Mammary epithelial cell (primary cell): ENCODE measurements at regions of chrX and their contacts with region 1.

Region 1: DNA sequence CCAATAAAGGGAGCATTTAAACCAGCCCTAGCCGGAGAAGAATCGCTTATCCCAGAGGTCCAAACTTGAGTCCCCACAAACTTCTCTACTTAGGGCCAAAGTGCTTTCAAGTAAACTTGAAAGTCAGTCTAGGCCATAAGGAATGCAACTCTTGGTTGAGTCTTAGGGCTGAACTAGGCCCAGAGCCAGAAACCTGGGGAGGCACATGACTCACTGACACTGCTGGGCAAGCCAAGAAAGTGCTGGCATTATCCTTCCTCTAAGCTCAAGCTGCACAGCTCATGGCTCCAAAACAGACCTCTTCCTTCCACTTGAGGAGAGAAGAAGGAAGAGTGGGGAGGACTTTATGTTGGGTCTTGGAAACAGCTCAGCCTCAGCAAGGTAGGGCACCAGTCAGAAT is 1257.3 kb upstream of the DIAPH2 start:
- DNase-seq: peak; percentile 59
- H3K4me3 ChIP-seq: no peak overlapping the region
- H3K27ac ChIP-seq: no peak overlapping the region
- H3K4me1 ChIP-seq: peaks cover 3% of the 10 kb centered on the region
- H3K27me3 ChIP-seq: no peaks in the 10 kb centered on the region
- CTCF ChIP-seq: no peak

Region 2: DNA sequence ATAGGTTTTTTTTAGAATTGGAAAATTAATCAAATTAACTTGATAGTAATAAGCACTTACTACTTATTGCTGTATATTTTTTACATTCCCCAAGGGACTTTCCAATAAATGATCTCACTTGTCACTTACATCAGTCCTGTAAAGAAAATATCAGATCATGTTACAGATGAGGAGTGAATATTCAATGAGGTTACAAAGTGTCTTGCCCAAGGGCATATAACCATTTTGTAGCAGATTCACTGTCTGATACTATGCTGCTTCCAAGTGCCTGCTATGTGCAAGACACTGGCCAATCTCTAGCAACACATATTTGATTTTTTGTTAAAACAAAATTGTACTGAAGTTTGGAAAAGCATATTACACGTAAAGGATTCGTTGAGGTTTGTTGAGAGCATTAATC is 465.7 kb before region 1 on chrX:
- CTCF ChIA-PET with region 1: no interaction called
- dilution Hi-C with region 1: no loop called
- in situ Hi-C with region 1: no loop called
- intact Hi-C with region 1: no loop called
- DNase-seq: no peak
- H3K4me3 ChIP-seq: no peak overlapping the region
- H3K27ac ChIP-seq: no peak overlapping the region
- H3K4me1 ChIP-seq: no peaks in the 10 kb centered on the region
- H3K27me3 ChIP-seq: peaks cover 1% of the 10 kb centered on the region
- CTCF ChIP-seq: no peak

Region 3: GRCh38 chrX:95382799-95383198 is 44.6 kb before region 1 on chrX:
- CTCF ChIA-PET with region 1: no interaction called
- dilution Hi-C with region 1: no loop called
- in situ Hi-C with region 1: no loop called
- intact Hi-C with region 1: loop called (anchors 5 kb)
- DNase-seq: peak; percentile 84
- H3K4me3 ChIP-seq: peak overlapping the region in 1 of 3 experiments; percentile 31
- H3K27ac ChIP-seq: peak overlapping the region; percentile 72
- H3K4me1 ChIP-seq: peaks cover 13% of the 10 kb centered on the region
- H3K27me3 ChIP-seq: no peaks in the 10 kb centered on the region
- CTCF ChIP-seq: no peak

Region 4: DNA sequence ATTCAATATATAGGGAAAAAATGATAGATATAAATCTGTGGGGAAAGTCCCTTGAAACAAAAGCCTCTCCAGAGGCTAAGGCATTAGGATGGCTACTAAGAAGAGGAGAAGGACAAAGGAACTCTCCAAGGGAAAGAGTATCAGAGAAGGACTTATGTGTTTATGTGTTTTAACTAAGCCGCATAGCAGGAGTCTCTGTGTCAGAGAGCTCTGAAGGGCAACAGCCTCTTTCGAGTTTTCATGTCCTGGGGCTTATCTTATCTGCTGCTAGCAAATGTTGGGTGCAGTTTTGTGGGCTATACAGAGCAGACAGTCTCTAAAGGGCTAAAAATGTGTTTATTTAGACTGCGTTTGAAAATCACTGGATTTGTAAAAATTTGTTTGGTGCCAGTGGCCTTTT is 111.7 kb after region 1 on chrX:
- CTCF ChIA-PET with region 1: no interaction called
- dilution Hi-C with region 1: no loop called
- in situ Hi-C with region 1: no loop called
- intact Hi-C with region 1: no loop called
- DNase-seq: no peak
- H3K4me3 ChIP-seq: no peak overlapping the region
- H3K27ac ChIP-seq: no peak overlapping the region
- H3K4me1 ChIP-seq: no peaks in the 10 kb centered on the region
- H3K27me3 ChIP-seq: peaks cover 2% of the 10 kb centered on the region
- CTCF ChIP-seq: no peak

Region 5: DNA sequence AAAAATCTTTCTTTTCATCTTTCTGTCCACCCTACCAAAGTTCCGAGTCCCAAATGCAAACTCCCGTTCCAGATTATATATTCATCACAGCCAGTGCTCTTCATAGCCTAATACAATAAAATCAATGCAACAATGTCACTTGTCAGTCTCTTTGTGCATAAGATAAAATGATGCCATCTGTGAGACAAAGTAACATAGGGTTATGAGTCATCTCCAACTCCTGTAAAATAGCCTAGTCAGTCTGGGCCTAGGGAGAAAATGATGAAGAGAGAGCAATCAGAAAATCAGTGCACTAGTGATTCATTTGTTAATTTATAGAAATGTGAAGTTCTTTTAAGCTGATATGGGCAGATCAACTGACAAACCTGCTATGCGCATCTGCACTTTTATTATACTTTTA is 568.2 kb after region 1 on chrX:
- CTCF ChIA-PET with region 1: no interaction called
- dilution Hi-C with region 1: no loop called
- in situ Hi-C with region 1: no loop called
- intact Hi-C with region 1: no loop called
- DNase-seq: no peak
- H3K4me3 ChIP-seq: no peak overlapping the region
- H3K27ac ChIP-seq: no peak overlapping the region
- H3K4me1 ChIP-seq: no peaks in the 10 kb centered on the region
- H3K27me3 ChIP-seq: no peaks in the 10 kb centered on the region
- CTCF ChIP-seq: no peak